ENCODE measurements at regions of chr17 and their contacts with region 1.

Region 1: GRCh38 chr17:74923533-74924249 is 382 bp upstream of the OTOP2 start:
- DNase-seq: peak; percentile 87
- CTCF ChIP-seq: peak; percentile 89

Region 2: GRCh38 chr17:74935585-74936469 is 12.1 kb after region 1 on chr17 and contains the start of gene OTOP3:
- CTCF ChIA-PET with region 1: interaction called, 13 read pairs
- POLR2A ChIA-PET with region 1: no interaction called
- DNase-seq: no peak
- CTCF ChIP-seq: no peak

Region 3: GRCh38 chr17:74945543-74945942 is 21.9 kb after region 1 on chr17:
- CTCF ChIA-PET with region 1: interaction called, 390 read pairs
- POLR2A ChIA-PET with region 1: no interaction called
- DNase-seq: peak; percentile 76
- CTCF ChIP-seq: no peak